ENCODE measurements at regions of chr2 and their contacts with region 1.

Region 1: DNA sequence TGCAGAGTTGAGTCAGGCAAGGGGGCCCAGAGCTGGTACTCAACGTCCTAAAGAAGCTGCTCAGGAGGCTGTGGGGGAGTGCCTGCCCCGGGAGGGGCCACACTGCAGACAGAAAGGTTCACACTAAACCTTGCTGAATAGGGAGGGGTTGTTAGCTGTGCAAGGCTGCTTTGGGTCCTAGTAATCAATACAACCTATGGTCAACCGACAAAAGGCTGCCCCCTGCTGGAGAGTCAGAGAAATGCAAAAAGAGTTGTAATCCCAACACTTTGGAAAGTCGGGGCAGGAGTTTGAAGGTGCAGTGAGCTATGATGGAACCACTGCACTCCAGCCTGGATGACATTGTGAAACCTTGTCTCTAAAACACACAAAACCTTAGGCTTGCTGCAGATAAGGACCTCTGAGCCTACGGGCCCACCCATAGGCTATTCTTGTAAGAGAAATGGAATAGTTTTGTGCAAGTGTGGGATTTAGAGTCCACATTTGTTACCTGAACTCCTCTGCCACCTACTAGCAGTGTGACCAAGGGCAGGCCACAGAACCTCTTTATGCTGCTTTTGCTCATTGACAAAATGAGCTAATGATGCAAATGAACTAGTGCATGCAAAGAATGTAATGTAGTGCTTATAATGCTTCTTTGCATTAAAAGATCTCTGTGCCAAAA is 81.5 kb downstream of the PRPF40A start:
- DNase-seq: peak; percentile 69
- H3K4me3 ChIP-seq: no peak overlapping the region
- H3K27ac ChIP-seq: no peak overlapping the region
- H3K4me1 ChIP-seq: no peaks in the 10 kb centered on the region
- H3K27me3 ChIP-seq: no peaks in the 10 kb centered on the region
- CTCF ChIP-seq: peak; percentile 79 to 84 (median 83)
- EP300 ChIP-seq: no peak
- POLR2A ChIP-seq: no peak

Region 2: DNA sequence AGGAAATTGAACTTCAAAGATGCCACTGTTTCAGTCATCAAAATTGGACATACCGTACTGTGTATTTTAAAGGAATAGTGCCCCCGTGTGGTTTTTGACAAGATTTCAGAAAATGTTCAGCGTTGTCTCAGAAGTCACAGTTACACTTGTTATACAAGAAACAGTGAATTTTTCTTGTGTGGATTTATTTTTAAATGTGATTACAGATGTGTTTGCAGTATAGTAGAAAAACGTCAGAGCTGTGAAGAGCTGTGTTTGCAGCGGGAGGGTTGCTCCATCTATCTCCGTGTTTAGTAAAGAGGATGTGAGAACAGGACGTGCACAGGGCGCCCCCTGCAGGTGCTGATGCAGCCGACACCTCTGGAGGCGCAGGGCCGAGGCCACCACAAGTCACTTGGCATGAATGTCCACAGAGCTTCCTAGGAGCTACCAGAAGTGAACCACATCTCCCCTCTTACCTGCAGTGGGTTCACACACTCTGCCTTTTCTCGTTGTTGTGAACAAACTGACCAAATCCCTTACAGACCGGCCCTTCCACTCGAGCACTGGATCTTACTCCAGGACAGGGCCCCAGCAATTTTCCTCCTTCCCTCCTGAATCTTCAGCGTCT is 610.0 kb before region 1 on chr2:
- in situ Hi-C with region 1: loop called (anchors 25 kb)
- intact Hi-C with region 1: no loop called
- DNase-seq: peak; percentile 84
- H3K4me3 ChIP-seq: peak overlapping the region in 1 of 4 donors; percentile 27
- H3K27ac ChIP-seq: no peak overlapping the region
- H3K4me1 ChIP-seq: no peaks in the 10 kb centered on the region
- H3K27me3 ChIP-seq: no peaks in the 10 kb centered on the region
- CTCF ChIP-seq: peak; percentile 87 to 95 (median 89)
- EP300 ChIP-seq: no peak
- POLR2A ChIP-seq: no peak

Region 3: DNA sequence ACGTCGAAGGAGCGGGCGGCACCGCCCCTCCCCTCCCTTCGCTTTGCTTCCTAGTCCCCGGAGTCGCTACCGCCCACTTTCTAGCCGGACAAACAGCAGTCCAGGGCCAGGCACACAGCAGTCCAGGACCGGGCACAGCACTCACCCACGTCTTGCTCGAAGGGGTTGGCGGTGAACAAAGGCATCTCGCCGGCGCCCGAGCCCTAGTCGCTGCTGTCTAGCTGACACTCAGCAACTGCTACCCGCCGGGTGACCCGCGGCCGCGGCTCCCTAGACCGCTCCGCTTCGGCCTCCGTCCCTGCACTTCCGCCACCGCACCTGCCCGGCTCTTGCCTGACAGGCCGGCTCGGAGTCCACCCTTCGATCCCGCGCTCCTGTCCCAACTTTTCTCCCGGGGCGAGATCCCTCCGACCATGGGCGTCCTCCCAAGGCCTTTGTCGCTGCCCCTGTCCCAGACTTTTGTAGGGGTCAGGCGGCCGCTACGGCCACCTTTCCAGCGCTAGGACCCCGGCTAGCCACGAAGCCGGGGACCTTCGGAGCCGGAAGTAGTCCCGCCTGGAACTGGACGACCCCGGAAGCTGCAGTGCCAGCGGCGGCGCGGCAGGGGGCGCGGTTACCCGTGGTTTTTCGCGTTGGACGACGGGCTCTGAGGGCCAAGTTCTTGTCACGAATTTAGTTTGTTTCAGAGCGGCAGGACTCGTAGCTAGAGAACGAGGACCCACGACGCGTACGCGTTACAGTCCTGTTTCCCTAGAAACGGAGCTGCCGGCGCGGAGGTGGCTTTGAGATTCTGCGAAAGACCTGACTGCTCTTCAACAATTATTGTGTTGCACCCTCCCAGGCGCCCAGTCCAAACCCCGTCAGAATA is 460.1 kb before region 1 on chr2 and contains the start of gene STAM2:
- in situ Hi-C with region 1: loop called in 1 of 4 experiments (anchors 10 kb)
- intact Hi-C with region 1: loop called (anchors 5 kb)
- DNase-seq: peak; percentile 94
- H3K4me3 ChIP-seq: peak within 1 kb of the TSS; percentile 55 to 90 (median 86)
- H3K27ac ChIP-seq: peak within 1 kb of the TSS; percentile 95 to 98 (median 96)
- H3K4me1 ChIP-seq: peaks cover 16 to 41% (median 39%) of the 10 kb centered on the region in 4 donors
- H3K27me3 ChIP-seq: no peaks in the 10 kb centered on the region
- CTCF ChIP-seq: peak; percentile 93 to 99 (median 96)
- EP300 ChIP-seq: no peak
- POLR2A ChIP-seq: peak; percentile 90
- total RNA-seq, gene STAM2: 17.1 to 57.2 (median 38.1) TPM

Region 4: DNA sequence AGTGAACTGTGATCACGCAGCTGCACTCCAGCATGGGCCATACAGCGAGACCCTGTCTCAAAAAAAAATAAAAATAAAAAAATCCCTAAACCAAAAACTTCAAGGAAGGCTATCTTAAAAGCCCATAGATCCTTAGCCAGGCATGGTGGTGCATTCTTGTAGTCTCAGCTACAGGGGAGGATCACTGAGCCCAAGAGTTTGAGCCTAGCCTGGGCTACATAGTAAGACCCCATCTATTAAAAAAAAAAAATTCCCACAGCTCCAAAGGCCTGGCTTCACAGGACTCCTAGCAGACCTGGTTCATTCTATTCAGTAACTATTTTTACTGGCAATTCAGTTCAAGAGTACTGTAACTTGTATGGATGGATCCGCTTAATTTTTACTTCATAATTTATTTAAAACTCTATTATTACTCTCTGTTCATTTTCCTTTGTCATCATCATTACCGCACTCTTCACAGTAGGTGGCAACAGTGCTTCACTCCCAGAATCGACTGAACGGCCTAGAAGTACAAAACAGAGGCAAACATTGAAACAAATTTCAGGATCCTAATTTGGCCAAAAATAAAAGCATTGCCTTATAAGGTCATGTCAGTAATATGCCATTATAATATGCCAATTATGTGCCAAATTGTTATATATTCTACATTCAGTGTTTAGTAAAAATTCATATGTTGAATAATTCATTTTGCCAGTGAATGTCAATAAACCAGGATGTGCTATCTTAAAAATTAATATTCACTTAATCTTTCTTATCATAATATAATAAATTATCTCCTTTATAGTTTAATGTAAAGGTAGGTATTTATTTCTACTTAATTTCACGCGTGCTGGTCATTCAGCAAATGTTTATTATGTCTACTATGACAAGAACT is 445.9 kb before region 1 on chr2:
- in situ Hi-C with region 1: loop called in 3 of 4 experiments (anchors 5 to 10 kb)
- intact Hi-C with region 1: loop called (anchors 5 kb)
- DNase-seq: peak; percentile 35
- H3K4me3 ChIP-seq: no peak overlapping the region
- H3K27ac ChIP-seq: no peak overlapping the region
- H3K4me1 ChIP-seq: no peaks in the 10 kb centered on the region
- H3K27me3 ChIP-seq: no peaks in the 10 kb centered on the region
- CTCF ChIP-seq: peak; percentile 67 to 87 (median 76)
- EP300 ChIP-seq: no peak
- POLR2A ChIP-seq: no peak

Region 5: GRCh38 chr2:152335010-152335725 is 300.6 kb before region 1 on chr2 and contains the start of gene FMNL2:
- in situ Hi-C with region 1: loop called in 1 of 4 experiments (anchors 10 kb)
- intact Hi-C with region 1: no loop called
- DNase-seq: peak; percentile 88
- H3K4me3 ChIP-seq: peak within 1 kb of the TSS; percentile 85 to 100 (median 88)
- H3K27ac ChIP-seq: peak within 1 kb of the TSS; percentile 86 to 94 (median 92)
- H3K4me1 ChIP-seq: peaks cover 4 to 24% (median 6%) of the 10 kb centered on the region in 4 donors
- H3K27me3 ChIP-seq: no peaks in the 10 kb centered on the region
- CTCF ChIP-seq: peak in 2 of 5 experiments; percentile 5 to 8
- EP300 ChIP-seq: no peak
- POLR2A ChIP-seq: peak; percentile 66
- total RNA-seq, gene FMNL2: 9.2 to 31.4 (median 23.9) TPM